K562 (cell line): ENCODE measurements at regions of chr15 and their contacts with region 1.

Region 1: DNA sequence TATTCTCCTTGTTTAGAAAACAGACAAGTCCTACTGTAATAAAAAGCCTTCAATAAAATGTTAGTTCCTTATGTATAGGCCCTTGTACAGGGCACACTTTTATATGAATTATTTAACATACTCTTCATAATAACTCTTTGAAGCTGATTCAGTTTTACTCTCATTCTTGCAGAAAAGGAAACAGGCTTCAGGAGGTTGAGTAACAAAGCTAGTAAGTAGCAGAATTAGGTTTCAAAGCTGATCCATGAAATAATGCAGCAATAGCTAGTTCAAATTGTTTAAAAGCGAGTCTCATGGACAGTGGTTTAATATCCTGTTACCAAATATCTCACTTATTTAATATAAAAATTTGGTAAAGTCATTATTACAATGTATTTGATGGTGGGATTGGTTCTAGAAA is 25.0 kb downstream of the TCF12 start:
- DNase-seq: no peak
- ATAC-seq: no peak
- H3K4me3 ChIP-seq: no peak overlapping the region
- H3K27ac ChIP-seq: no peak overlapping the region
- H3K4me1 ChIP-seq: no peaks in the 10 kb centered on the region
- H3K27me3 ChIP-seq: no peaks in the 10 kb centered on the region
- CTCF ChIP-seq: no peak
- EP300 ChIP-seq: no peak
- POLR2A ChIP-seq: no peak
- RAD21 ChIP-seq: no peak

Region 2: DNA sequence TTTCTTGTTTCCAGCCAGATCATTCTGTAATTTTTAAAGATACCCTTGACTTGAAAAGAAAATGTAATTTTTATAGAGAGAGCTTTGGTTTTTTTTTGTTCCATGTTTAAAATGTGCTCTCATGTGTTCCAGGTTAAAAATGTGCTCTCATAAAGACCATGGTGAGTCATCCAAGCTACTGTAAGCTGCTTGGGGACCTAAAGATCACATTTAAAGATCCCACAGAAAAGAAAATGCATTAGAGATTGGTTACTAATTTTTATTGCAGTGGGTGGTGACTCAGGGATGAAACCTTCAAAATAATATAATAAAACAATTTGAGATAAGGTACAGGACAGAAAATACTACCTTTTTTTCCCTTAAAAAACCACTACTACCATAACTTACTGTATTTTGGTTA is 14.0 kb before region 1 on chr15:
- CTCF ChIA-PET with region 1: no interaction called
- POLR2A ChIA-PET with region 1: interaction called, 16 read pairs
- in situ Hi-C with region 1: no loop called
- intact Hi-C with region 1: no loop called
- DNase-seq: peak; percentile 18 to 37 (median 26)
- ATAC-seq: peak; percentile 52
- H3K4me3 ChIP-seq: no peak overlapping the region
- H3K27ac ChIP-seq: peak overlapping the region; percentile 24; the same call in 1 of the 3 replicates
- H3K4me1 ChIP-seq: peaks cover 0 to 23% of the 10 kb centered on the region in 2 experiments; a peak in 3 of 5 replicates
- H3K27me3 ChIP-seq: no peaks in the 10 kb centered on the region
- CTCF ChIP-seq: no peak
- EP300 ChIP-seq: no peak
- POLR2A ChIP-seq: no peak
- RAD21 ChIP-seq: no peak

Region 3: DNA sequence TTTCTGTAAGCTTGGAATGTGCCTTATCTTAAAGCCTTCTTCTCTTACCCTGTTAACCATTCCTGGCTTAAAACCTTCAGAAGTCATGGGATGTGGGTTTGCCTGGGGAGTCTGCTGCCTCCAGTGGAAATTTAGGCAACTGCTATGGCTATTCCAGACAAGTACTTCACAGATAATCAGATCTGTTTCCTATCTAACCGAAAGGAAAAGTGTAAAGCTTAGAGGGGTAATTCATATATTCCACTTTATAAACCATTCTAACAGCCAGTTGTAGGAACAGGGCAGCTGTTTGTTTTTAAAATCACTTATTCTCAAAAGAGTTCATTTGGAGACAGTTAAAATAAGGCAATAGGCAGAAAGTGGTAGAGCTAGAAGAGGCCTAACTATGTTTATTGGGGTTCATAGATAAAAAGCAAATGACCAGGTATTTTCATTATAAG is 195.0 kb after region 1 on chr15:
- CTCF ChIA-PET with region 1: no interaction called
- POLR2A ChIA-PET with region 1: no interaction called
- in situ Hi-C with region 1: no loop called
- intact Hi-C with region 1: no loop called
- DNase-seq: peak; percentile 44 to 65 (median 54)
- ATAC-seq: peak; percentile 96
- H3K4me3 ChIP-seq: no peak overlapping the region
- H3K27ac ChIP-seq: no peak overlapping the region
- H3K4me1 ChIP-seq: peaks cover 0 to 5% of the 10 kb centered on the region in 2 experiments; a peak in 2 of 5 replicates
- H3K27me3 ChIP-seq: no peaks in the 10 kb centered on the region
- CTCF ChIP-seq: peak; percentile 58 to 77 (median 69)
- EP300 ChIP-seq: no peak
- POLR2A ChIP-seq: no peak
- RAD21 ChIP-seq: peak; percentile 34 to 57; a peak in 2 of 4 replicates